CD4-positive, alpha-beta T cell (primary cell): ENCODE measurements at regions of chr13 and their contacts with region 1.

Region 1: DNA sequence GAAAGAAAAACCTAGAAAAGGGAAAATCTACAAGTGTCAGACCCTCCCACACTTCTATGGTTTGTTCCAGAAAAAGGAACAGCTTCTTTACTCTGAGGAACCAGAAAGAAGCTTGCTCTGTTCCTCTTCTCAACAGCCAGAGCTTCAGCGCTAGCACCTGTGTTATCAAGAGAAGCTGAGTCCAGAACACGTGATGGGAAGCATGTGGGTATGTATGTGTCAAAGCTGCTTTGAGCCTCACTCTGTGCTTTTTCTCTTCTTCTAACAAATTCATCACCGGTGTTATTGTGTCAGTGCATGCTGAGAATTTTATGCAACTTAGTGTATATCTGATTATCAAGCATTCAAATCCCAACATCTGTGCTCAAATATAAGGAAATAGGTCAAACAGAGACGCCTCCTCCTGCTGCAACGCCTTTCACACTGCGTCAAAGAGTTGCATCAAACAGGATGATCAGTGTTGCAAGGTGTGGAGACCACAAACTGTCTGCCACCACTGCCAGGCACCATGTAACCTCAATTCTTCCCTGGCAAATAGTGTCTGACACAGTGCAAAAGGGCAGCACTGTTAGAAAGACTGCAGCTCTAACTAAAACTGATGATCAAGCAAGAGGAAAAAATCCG is 83.9 kb downstream of the LRRC63 start:
- DNase-seq: peak; percentile 45 to 92 (median 58)
- ATAC-seq: peak; percentile 84
- H3K4me3 ChIP-seq: peak overlapping the region; percentile 11
- H3K4me3 Mint-ChIP-seq: peak overlapping the region; percentile 38
- H3K27ac ChIP-seq: peak overlapping the region; percentile 85 to 89
- H3K27ac Mint-ChIP-seq: peak overlapping the region; percentile 94
- H3K4me1 ChIP-seq: peaks cover 41% of the 10 kb centered on the region
- H3K4me1 Mint-ChIP-seq: peaks cover 58% of the 10 kb centered on the region
- H3K27me3 ChIP-seq: no peaks in the 10 kb centered on the region
- H3K27me3 Mint-ChIP-seq: no peaks in the 10 kb centered on the region
- CTCF ChIP-seq: no peak

Region 2: GRCh38 chr13:46160471-46161066 is 135.0 kb before region 1 on chr13:
- CTCF ChIA-PET with region 1: interaction called, 8 read pairs
- POLR2A ChIA-PET with region 1: interaction called, 11 read pairs
- intact Hi-C with region 1: no loop called
- DNase-seq: peak in 7 of 14 experiments; percentile 19 to 91 (median 51)
- ATAC-seq: peak; percentile 83
- H3K4me3 ChIP-seq: no peak overlapping the region
- H3K4me3 Mint-ChIP-seq: peak overlapping the region; percentile 83
- H3K27ac ChIP-seq: peak overlapping the region; percentile 62 to 69
- H3K27ac Mint-ChIP-seq: peak overlapping the region; percentile 91
- H3K4me1 ChIP-seq: peaks cover 32% of the 10 kb centered on the region
- H3K4me1 Mint-ChIP-seq: peaks cover 57% of the 10 kb centered on the region
- H3K27me3 ChIP-seq: no peaks in the 10 kb centered on the region
- H3K27me3 Mint-ChIP-seq: no peaks in the 10 kb centered on the region
- CTCF ChIP-seq: peak; percentile 89

Region 3: GRCh38 chr13:46176756-46177155 is 118.8 kb before region 1 on chr13:
- CTCF ChIA-PET with region 1: interaction called, 3 read pairs
- POLR2A ChIA-PET with region 1: interaction called, 47 read pairs
- intact Hi-C with region 1: loop called in 1 of 2 experiments (anchors 10 kb)
- DNase-seq: peak in 4 of 14 experiments; percentile 38 to 71 (median 60)
- ATAC-seq: no peak
- H3K4me3 ChIP-seq: peak overlapping the region; percentile 84
- H3K4me3 Mint-ChIP-seq: peak overlapping the region; percentile 72
- H3K27ac ChIP-seq: peak overlapping the region; percentile 58 to 75
- H3K27ac Mint-ChIP-seq: peak overlapping the region; percentile 98
- H3K4me1 ChIP-seq: peaks cover 46% of the 10 kb centered on the region
- H3K4me1 Mint-ChIP-seq: peaks cover 77% of the 10 kb centered on the region
- H3K27me3 ChIP-seq: no peaks in the 10 kb centered on the region
- H3K27me3 Mint-ChIP-seq: no peaks in the 10 kb centered on the region
- CTCF ChIP-seq: no peak

Region 4: GRCh38 chr13:46315491-46316075 is 20.0 kb after region 1 on chr13:
- CTCF ChIA-PET with region 1: interaction called, 7 read pairs
- POLR2A ChIA-PET with region 1: interaction called, 42 read pairs
- intact Hi-C with region 1: loop called in 1 of 2 experiments (anchors 2 kb)
- DNase-seq: no peak
- ATAC-seq: no peak
- H3K4me3 ChIP-seq: no peak overlapping the region
- H3K4me3 Mint-ChIP-seq: no peak overlapping the region
- H3K27ac ChIP-seq: no peak overlapping the region
- H3K27ac Mint-ChIP-seq: no peak overlapping the region
- H3K4me1 ChIP-seq: peaks cover 11% of the 10 kb centered on the region
- H3K4me1 Mint-ChIP-seq: peaks cover 64% of the 10 kb centered on the region
- H3K27me3 ChIP-seq: no peaks in the 10 kb centered on the region
- H3K27me3 Mint-ChIP-seq: no peaks in the 10 kb centered on the region
- CTCF ChIP-seq: no peak

Region 5: DNA sequence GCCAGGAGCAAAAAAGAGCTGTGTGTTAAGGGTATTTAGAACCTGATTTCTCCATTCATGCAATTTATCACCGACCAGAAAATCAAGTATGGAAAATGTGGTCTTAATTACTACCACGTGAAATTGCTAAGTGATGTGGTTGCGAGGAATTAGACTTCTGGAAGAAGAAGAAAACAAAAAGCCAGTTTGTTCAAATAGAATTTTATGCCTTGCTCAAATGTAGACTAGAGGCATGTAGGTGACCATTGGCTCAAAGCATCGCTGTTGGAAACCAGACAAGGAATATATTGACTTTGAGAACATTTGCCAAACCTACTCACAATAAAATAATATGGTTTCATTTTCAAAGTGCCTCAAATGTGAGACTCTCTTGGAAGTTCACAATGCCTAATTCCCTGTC is 200.0 kb after region 1 on chr13:
- CTCF ChIA-PET with region 1: no interaction called
- POLR2A ChIA-PET with region 1: no interaction called
- intact Hi-C with region 1: no loop called
- DNase-seq: no peak
- ATAC-seq: no peak
- H3K4me3 ChIP-seq: no peak overlapping the region
- H3K4me3 Mint-ChIP-seq: no peak overlapping the region
- H3K27ac ChIP-seq: no peak overlapping the region
- H3K27ac Mint-ChIP-seq: no peak overlapping the region
- H3K4me1 ChIP-seq: no peaks in the 10 kb centered on the region
- H3K4me1 Mint-ChIP-seq: no peaks in the 10 kb centered on the region
- H3K27me3 ChIP-seq: peaks cover 0 to 3% of the 10 kb centered on the region in 2 experiments
- H3K27me3 Mint-ChIP-seq: peaks cover 2% of the 10 kb centered on the region
- CTCF ChIP-seq: no peak